HCT116 (cell line): ENCODE measurements at regions of chr11 and their contacts with region 1.

Region 1: GRCh38 chr11:103601225-103601846 is 435.1 kb upstream of the DDI1 start:
- DNase-seq: no peak
- ATAC-seq: peak; percentile 88
- H3K4me3 ChIP-seq: no peak overlapping the region
- H3K27ac ChIP-seq: no peak overlapping the region
- H3K4me1 ChIP-seq: no peaks in the 10 kb centered on the region
- H3K27me3 ChIP-seq: no peaks in the 10 kb centered on the region
- CTCF ChIP-seq: peak; percentile 69 to 93 (median 92); a peak in 5 of 6 replicates
- POLR2A ChIP-seq: no peak
- RAD21 ChIP-seq: peak; percentile 83

Region 2: DNA sequence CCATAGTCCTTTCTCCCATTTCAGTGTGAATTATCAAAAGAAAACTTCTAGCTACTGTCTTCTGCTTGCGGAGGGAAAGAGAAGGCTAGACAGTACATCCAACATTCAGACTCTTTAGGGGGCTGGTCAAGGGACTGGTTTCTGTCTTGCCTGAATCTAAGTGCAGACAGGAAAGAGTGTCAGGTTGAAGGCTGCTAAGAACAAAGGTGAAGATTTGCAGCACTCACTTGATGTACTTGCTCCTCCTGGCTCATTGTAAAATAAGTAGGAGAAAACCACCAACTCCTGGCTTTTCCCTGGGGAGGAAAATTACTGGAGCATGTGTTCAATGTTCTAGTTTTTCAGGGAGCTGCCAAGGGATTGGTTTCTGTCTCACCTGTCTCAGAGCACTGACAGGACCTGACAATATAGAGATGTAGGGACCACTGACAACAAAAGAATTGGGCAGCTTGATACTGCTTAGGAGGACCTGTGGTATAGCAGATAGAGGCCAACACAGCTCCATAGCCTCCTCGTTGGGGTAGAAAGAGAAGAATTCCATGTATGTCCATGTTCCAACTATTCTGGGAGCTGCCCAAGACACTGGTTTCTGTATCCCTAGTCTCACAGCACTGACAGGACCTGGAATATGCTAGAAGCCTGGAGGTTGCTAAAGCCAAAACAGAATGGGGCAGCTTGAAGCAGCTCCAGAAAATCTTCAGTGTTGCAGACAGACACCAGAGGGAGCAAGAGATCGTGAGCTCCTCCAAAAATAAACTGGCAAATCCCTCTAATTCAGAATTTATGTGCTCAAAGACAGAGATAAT is 686.9 kb before region 1 on chr11:
- CTCF ChIA-PET with region 1: no interaction called
- POLR2A ChIA-PET with region 1: no interaction called
- RAD21 ChIA-PET with region 1: no interaction called
- intact Hi-C with region 1: no loop called
- DNase-seq: peak; percentile 37
- ATAC-seq: peak; percentile 96
- H3K4me3 ChIP-seq: no peak overlapping the region
- H3K27ac ChIP-seq: no peak overlapping the region
- H3K4me1 ChIP-seq: no peaks in the 10 kb centered on the region
- H3K27me3 ChIP-seq: no peaks in the 10 kb centered on the region
- CTCF ChIP-seq: peak; percentile 66 to 72 (median 70)
- POLR2A ChIP-seq: no peak
- RAD21 ChIP-seq: peak; percentile 71

Region 3: DNA sequence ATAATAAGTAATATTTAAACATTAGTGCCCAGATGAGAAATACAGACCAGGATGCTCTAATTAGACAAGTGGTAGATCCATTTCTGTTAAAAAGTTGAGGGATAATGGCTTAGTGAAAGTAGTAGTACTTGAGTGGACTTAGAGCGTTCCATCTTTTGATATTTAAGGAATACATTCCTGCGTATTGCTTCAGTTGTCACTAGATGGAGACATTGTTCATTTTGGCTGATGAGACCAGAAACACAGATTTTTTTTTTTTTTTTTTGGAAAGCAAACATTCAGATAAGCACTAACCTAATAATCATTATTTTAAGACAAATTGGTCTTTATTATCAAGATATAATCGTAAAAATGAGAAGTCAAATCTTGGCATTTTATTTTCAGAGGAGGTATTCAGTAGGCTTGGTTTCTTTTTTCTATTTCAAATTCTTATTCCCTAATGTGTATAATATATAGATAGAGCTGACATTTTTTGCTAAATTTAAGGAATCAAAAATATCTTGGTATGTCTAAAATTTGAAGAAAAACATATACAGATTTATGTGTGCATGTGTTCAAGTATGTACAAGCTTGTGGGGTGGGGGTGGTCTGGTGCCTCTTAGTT is 399.2 kb before region 1 on chr11:
- CTCF ChIA-PET with region 1: interaction called, 6 read pairs
- POLR2A ChIA-PET with region 1: no interaction called
- RAD21 ChIA-PET with region 1: no interaction called
- intact Hi-C with region 1: loop called (anchors 1 kb)
- DNase-seq: peak; percentile 22
- ATAC-seq: peak; percentile 63
- H3K4me3 ChIP-seq: no peak overlapping the region
- H3K27ac ChIP-seq: no peak overlapping the region
- H3K4me1 ChIP-seq: no peaks in the 10 kb centered on the region
- H3K27me3 ChIP-seq: no peaks in the 10 kb centered on the region
- CTCF ChIP-seq: peak; percentile 65 to 75 (median 67); a peak in 5 of 6 replicates
- POLR2A ChIP-seq: no peak
- RAD21 ChIP-seq: peak; percentile 74

Region 4: DNA sequence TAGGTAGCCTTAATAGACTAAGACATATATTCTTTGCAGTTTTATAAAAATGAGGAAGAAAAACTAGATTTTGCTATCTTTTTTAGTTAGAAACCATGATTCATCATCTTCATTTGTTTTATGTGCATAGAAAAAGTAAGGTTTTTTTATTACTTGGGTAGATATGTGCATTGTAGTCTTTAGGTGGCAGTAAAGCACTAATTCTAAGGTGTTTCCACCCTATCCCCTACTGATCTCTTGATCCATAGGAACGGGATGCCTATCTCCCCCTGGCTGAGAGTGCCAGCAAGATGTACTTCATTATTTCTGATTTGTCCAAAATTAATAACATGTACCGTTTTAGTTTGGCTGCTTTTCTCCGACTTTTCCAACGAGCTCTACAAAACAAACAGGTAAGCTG is 344.0 kb before region 1 on chr11:
- CTCF ChIA-PET with region 1: no interaction called
- POLR2A ChIA-PET with region 1: no interaction called
- RAD21 ChIA-PET with region 1: no interaction called
- intact Hi-C with region 1: loop called (anchors 1 kb)
- DNase-seq: peak; percentile 35
- ATAC-seq: peak; percentile 98
- H3K4me3 ChIP-seq: no peak overlapping the region
- H3K27ac ChIP-seq: no peak overlapping the region
- H3K4me1 ChIP-seq: no peaks in the 10 kb centered on the region
- H3K27me3 ChIP-seq: no peaks in the 10 kb centered on the region
- CTCF ChIP-seq: peak; percentile 46 to 70 (median 58); a peak in 5 of 6 replicates
- POLR2A ChIP-seq: no peak
- RAD21 ChIP-seq: peak; percentile 73

Region 5: DNA sequence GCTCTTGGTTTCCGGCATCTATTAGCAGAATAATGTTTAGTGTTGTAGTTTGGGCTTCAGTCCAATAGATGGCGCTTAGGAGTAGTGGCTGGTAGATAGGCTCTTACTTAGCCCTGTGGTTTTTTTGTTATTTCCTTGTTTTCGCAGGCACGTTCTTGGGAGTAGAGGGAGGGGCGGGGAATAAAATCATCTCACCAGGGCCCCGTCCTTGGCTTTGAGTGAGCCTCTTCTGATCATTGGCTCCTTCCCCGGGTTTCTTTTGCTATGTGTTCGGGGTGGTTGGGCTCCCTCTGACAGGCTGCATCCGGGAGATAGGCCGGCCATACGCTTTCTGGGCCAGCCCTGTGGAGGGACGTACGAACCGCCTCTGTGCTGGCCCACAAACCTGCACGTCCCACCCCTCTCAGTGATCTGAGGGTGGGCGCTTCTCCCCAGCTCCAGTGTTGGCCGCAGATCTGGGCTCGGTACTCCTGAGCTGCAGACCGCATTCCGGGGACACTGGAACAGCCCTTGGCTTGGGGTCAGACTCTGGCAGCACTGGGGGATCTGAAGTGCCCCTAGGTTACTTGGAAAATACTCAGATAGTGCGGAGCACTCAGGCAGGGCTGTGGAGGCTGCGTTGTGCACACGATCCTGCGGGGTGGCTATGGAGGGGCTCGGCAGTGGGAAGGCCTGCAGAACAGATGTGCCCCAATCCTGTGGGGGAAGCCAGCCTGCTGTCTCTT is 275.1 kb before region 1 on chr11:
- CTCF ChIA-PET with region 1: interaction called, 3 read pairs
- POLR2A ChIA-PET with region 1: no interaction called
- RAD21 ChIA-PET with region 1: no interaction called
- intact Hi-C with region 1: loop called (anchors 2 kb)
- DNase-seq: peak; percentile 58
- ATAC-seq: peak; percentile 96
- H3K4me3 ChIP-seq: no peak overlapping the region
- H3K27ac ChIP-seq: peak overlapping the region; percentile 30; the same call in 1 of the 2 replicates
- H3K4me1 ChIP-seq: peaks cover 0 to 8% of the 10 kb centered on the region in 2 experiments; a peak in 2 of 4 replicates
- H3K27me3 ChIP-seq: no peaks in the 10 kb centered on the region
- CTCF ChIP-seq: peak; percentile 42 to 76 (median 75); a peak in 5 of 6 replicates
- POLR2A ChIP-seq: no peak
- RAD21 ChIP-seq: peak; percentile 62

Region 6: GRCh38 chr11:103709371-103709770 is 108.0 kb after region 1 on chr11:
- CTCF ChIA-PET with region 1: no interaction called
- POLR2A ChIA-PET with region 1: no interaction called
- RAD21 ChIA-PET with region 1: no interaction called
- intact Hi-C with region 1: no loop called
- DNase-seq: no peak
- ATAC-seq: no peak
- H3K4me3 ChIP-seq: no peak overlapping the region
- H3K27ac ChIP-seq: no peak overlapping the region
- H3K4me1 ChIP-seq: no peaks in the 10 kb centered on the region
- H3K27me3 ChIP-seq: no peaks in the 10 kb centered on the region
- CTCF ChIP-seq: no peak
- POLR2A ChIP-seq: no peak
- RAD21 ChIP-seq: no peak